IMR-90 (cell line): ENCODE measurements at regions of chr7 and their contacts with region 1.

Region 1: DNA sequence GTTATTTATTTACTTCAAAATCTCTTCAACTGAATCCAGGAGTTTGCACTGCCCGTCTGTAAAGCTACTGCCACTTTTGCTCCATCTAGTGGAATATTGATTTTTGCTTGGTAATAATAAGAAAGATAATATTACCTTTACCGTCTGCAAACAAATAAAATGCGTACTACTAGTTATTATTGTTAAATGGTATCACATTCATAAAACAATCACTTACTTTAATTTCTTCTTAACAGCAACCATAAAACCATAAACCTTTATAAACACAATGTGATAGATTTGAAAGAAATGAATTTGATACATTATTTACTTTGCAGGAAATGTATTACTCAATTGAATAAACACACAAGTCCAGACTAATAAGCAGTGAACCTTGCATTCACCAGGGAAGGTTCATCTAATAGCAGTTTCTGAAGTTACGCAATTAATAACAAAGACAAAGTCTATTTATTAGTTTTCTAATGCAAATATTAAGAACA is 6.4 kb downstream of the AGMO start:
- DNase-seq: peak; percentile 23
- ATAC-seq: peak; percentile 21; the same call in 1 of the 2 replicates
- H3K4me3 ChIP-seq: no peak overlapping the region
- H3K27ac ChIP-seq: no peak overlapping the region
- H3K4me1 ChIP-seq: peaks cover 2% of the 10 kb centered on the region; the same call in 1 of the 2 replicates
- H3K27me3 ChIP-seq: no peaks in the 10 kb centered on the region
- CTCF ChIP-seq: peak; percentile 36; the same call in 1 of the 2 replicates
- POLR2A ChIP-seq: no peak
- RAD21 ChIP-seq: peak; percentile 44

Region 2: GRCh38 chr7:15326044-15326644 is 229.3 kb before region 1 on chr7:
- CTCF ChIA-PET with region 1: no interaction called
- POLR2A ChIA-PET with region 1: no interaction called
- dilution Hi-C with region 1: no loop called
- in situ Hi-C with region 1: no loop called
- intact Hi-C with region 1: loop called (anchors 1 kb)
- DNase-seq: peak; percentile 35
- ATAC-seq: 0 out of 2 replicates have a peak, but pooled peaks have one; percentile 48
- H3K4me3 ChIP-seq: no peak overlapping the region
- H3K27ac ChIP-seq: no peak overlapping the region
- H3K4me1 ChIP-seq: no peaks in the 10 kb centered on the region
- H3K27me3 ChIP-seq: no peaks in the 10 kb centered on the region; the same call in 1 of the 2 replicates
- CTCF ChIP-seq: peak; percentile 73
- POLR2A ChIP-seq: no peak
- RAD21 ChIP-seq: peak; percentile 71

Region 3: DNA sequence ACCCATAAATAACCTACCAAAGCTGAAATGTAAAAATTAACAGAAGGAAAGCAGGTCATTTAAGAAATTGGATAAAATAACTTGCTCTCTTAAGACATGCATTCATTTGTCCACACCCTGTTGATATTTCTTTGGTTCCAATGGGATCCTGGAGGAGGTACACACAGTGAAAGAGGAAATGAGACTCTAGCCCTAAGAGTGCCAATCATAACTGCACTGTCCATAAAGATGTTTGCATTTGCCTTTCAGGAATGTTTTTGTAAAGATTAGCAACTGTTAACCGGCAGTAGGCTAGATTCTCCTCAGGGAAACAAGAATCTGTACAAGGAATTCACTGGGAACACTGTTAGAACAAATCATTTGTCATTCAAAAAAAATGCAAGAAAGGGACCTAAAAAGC is 70.0 kb after region 1 on chr7:
- CTCF ChIA-PET with region 1: no interaction called
- POLR2A ChIA-PET with region 1: no interaction called
- dilution Hi-C with region 1: no loop called
- in situ Hi-C with region 1: no loop called
- intact Hi-C with region 1: no loop called
- DNase-seq: no peak
- ATAC-seq: no peak
- H3K4me3 ChIP-seq: no peak overlapping the region
- H3K27ac ChIP-seq: no peak overlapping the region
- H3K4me1 ChIP-seq: no peaks in the 10 kb centered on the region
- H3K27me3 ChIP-seq: no peaks in the 10 kb centered on the region
- CTCF ChIP-seq: no peak
- POLR2A ChIP-seq: no peak
- RAD21 ChIP-seq: no peak

Region 4: GRCh38 chr7:15874774-15875173 is 319.4 kb after region 1 on chr7:
- CTCF ChIA-PET with region 1: no interaction called
- POLR2A ChIA-PET with region 1: no interaction called
- dilution Hi-C with region 1: no loop called
- in situ Hi-C with region 1: no loop called
- intact Hi-C with region 1: no loop called
- DNase-seq: no peak
- ATAC-seq: no peak
- H3K4me3 ChIP-seq: no peak overlapping the region
- H3K27ac ChIP-seq: no peak overlapping the region
- H3K4me1 ChIP-seq: no peaks in the 10 kb centered on the region
- H3K27me3 ChIP-seq: no peaks in the 10 kb centered on the region
- CTCF ChIP-seq: no peak
- POLR2A ChIP-seq: no peak
- RAD21 ChIP-seq: no peak